ENCODE measurements at regions of chr4 and their contacts with region 1.

Region 1: GRCh38 chr4:68498413-68499007 is 51.2 kb downstream of the TMPRSS11E start:
- ATAC-seq: peak; percentile 41 to 84 (median 63)
- H3K4me3 ChIP-seq: no peak overlapping the region
- H3K27ac ChIP-seq: no peak overlapping the region
- H3K4me1 ChIP-seq: no peaks in the 10 kb centered on the region

Region 2: GRCh38 chr4:68011684-68012083 is 486.8 kb before region 1 on chr4:
- in situ Hi-C with region 1: no loop called
- ATAC-seq: no peak
- H3K4me3 ChIP-seq: no peak overlapping the region
- H3K27ac ChIP-seq: no peak overlapping the region
- H3K4me1 ChIP-seq: no peaks in the 10 kb centered on the region

Region 3: GRCh38 chr4:68267433-68267944 is 231.0 kb before region 1 on chr4:
- in situ Hi-C with region 1: no loop called
- ATAC-seq: peak in 2 of 8 experiments; percentile 11 to 48
- H3K4me3 ChIP-seq: no peak overlapping the region
- H3K27ac ChIP-seq: no peak overlapping the region
- H3K4me1 ChIP-seq: no peaks in the 10 kb centered on the region

Region 4: GRCh38 chr4:68655764-68656444 is 157.4 kb after region 1 on chr4:
- in situ Hi-C with region 1: no loop called
- ATAC-seq: no peak
- H3K4me3 ChIP-seq: no peak overlapping the region
- H3K27ac ChIP-seq: no peak overlapping the region
- H3K4me1 ChIP-seq: peaks cover 0 to 1% of the 10 kb centered on the region in 2 donors

Region 5: DNA sequence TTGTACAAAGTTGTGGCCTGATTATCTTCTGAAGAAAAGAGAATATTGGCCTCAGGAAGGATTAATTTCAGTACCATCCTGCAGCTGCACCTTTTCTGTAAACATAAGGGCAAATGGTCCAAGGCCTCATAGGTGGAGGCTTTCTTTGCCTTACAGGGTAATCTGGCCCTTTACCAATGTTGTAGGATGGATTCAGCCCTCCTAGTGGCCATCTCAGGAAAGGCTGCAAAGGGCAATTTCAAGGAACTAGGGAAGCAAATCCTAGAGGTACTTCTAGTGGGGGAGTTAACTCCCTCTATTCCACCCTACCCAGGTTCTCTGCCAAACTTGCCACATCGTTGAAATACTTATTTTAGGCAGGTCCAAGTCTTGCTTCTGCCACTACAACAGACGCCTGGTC is 658.4 kb after region 1 on chr4:
- in situ Hi-C with region 1: loop called in 2 of 9 experiments (anchors 25 kb)
- ATAC-seq: no peak
- H3K4me3 ChIP-seq: no peak overlapping the region
- H3K27ac ChIP-seq: no peak overlapping the region
- H3K4me1 ChIP-seq: no peaks in the 10 kb centered on the region

Region 6: DNA sequence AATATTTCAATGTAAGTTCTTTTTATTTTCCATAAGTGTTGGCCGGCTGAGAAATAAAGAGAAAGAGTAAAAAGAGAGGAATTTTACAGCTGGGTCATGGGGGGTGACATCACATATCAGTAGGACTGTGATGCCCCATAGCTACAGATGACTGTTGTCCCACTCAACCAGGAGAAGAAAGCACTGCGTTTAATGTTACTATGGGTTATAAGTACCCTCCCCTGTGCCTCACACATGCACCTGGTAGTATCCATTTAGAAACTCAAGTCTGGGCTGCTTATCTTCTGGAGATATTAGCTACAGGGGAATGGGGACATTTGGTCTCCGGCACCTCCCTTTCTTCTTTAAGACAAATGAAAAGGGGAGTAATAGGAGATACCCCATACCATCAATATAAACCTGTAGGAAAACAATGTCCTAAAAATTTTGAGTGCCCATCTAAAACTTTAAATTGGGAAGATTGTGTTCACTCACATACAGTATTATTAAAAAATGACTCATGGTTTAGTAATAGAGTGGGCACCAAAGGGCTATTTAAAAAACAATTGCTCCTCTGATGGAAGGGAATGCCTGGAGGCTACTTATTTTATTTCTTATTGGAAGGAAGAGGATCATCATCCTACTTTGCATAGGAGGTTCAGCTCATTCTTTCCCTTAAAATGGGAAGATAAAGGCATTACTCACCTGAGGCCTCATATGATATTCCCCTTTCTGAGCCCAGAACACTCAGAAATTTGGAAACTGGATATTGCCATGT is 697.9 kb after region 1 on chr4:
- in situ Hi-C with region 1: loop called in 1 of 9 experiments (anchors 25 kb)
- ATAC-seq: no peak
- H3K4me3 ChIP-seq: no peak overlapping the region
- H3K27ac ChIP-seq: no peak overlapping the region
- H3K4me1 ChIP-seq: no peaks in the 10 kb centered on the region

Region 7: DNA sequence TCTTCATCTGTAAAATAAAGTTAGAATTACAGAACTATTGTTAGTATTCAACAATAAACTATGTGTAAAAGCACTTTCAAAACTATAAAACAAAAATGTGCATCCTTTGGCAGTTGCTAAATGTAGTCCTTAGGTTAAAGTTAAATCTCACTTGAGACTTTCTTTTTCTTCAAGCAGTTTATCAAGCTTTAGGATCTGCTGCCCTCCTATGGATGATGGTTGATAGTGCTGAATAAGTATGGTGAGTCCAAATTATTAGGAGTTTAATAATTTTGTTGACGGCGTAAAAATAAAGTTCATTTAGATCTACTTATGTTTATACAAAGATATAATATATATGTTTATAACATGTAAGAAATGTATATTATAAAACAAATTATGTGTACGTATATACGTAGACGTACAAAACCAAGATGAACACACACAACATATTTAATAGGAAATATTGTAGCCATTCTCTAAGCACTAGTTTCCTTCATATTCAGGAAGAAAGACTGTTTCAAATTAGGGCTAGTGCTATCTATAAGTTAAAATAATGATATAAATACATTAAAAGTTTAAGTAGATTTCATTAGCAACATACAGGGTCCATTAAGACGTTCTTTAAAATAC is 1118.7 kb after region 1 on chr4:
- in situ Hi-C with region 1: loop called in 1 of 9 experiments (anchors 25 kb)
- ATAC-seq: peak in 2 of 8 experiments; percentile 26 to 37
- H3K4me3 ChIP-seq: no peak overlapping the region
- H3K27ac ChIP-seq: no peak overlapping the region
- H3K4me1 ChIP-seq: no peaks in the 10 kb centered on the region

Measured in motor neuron (in vitro differentiated cells).